Endothelial cell of umbilical vein (primary cell): ENCODE measurements at regions of chr4 and their contacts with region 1.

Region 1: DNA sequence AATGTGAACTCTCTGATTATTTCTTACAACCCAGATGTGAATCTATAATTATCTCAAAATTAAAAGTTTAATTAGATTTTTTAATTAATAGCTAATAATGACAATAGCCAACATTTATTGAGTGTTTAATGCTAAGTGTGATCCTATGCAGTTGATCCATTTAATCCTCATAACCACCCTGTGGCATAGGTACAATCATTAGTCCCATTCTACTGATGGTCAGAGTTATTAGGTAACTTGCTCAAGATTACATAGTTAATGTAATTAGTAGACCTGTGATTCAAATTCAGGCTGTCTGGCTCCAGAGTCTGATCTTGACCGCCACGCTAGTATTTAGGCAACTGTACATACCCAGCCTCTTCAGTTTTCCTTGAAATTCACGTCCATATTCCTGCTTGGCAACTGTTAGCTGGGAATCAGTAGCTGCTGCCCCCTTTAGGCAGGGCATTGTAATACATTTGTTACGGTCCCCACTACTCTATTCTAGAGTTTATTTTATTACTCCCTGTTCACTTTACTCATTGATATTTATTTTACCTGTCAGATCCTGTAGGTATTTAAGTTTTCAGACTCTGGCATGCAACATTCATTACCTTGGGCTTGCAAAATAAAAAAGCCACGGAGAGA is 20.6 kb upstream of the TEC start:
- DNase-seq: peak; percentile 22
- H3K4me3 ChIP-seq: no peak overlapping the region
- H3K27ac ChIP-seq: no peak overlapping the region
- H3K4me1 ChIP-seq: no peaks in the 10 kb centered on the region
- H3K27me3 ChIP-seq: peaks cover 5 to 9% of the 10 kb centered on the region in 2 experiments
- CTCF ChIP-seq: peak; percentile 55 to 68
- POLR2A ChIP-seq: no peak

Region 2: DNA sequence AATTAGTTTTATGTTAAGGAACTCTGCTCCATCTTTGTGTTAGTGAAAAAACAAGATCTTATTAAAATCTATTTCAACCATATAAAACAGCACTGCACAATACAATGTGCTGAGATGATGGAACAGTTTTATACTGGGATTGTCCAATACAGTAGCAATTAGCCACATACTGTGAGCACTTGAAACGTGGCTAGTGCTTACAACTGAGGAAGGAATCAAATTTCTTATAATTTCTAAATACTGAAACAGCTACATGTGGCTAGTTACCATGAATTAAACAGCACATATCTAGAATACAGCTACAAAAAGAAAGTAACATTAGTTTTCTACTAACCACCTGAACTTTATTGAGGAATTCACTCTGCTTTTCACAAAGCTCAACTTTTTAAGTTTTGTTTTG is 390.6 kb before region 1 on chr4:
- CTCF ChIA-PET with region 1: no interaction called
- POLR2A ChIA-PET with region 1: no interaction called
- dilution Hi-C with region 1: no loop called
- intact Hi-C with region 1: no loop called
- DNase-seq: no peak
- H3K4me3 ChIP-seq: no peak overlapping the region
- H3K27ac ChIP-seq: no peak overlapping the region
- H3K4me1 ChIP-seq: no peaks in the 10 kb centered on the region
- H3K27me3 ChIP-seq: no peaks in the 10 kb centered on the region
- CTCF ChIP-seq: no peak
- POLR2A ChIP-seq: no peak

Region 3: DNA sequence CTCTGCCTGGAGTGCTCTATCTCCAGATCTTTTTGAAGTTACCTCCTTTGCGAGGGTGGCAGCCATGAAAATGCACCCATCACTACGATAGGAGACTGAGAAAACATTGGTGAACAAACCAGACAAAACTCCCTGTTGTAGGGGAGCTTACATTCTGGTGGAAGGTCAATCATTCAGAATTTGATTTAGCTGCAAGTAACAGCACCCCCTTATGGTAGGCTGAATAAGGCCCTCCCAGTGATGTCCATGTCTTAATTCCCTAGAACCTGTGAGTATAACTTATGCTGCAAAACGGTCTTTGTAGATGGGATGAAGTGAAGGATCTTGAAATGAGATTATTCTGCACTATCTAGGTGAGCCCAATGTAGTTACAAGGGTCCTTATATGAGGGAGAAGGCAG is 15.0 kb before region 1 on chr4:
- CTCF ChIA-PET with region 1: interaction called, 12 read pairs
- POLR2A ChIA-PET with region 1: no interaction called
- dilution Hi-C with region 1: no loop called
- intact Hi-C with region 1: no loop called
- DNase-seq: no peak
- H3K4me3 ChIP-seq: no peak overlapping the region
- H3K27ac ChIP-seq: no peak overlapping the region
- H3K4me1 ChIP-seq: no peaks in the 10 kb centered on the region
- H3K27me3 ChIP-seq: peaks cover 0 to 2% of the 10 kb centered on the region in 2 experiments
- CTCF ChIP-seq: peak; percentile 50 to 60
- POLR2A ChIP-seq: no peak